Panc1 (cell line): ENCODE measurements at regions of chr1 and their contacts with region 1.

Region 1: DNA sequence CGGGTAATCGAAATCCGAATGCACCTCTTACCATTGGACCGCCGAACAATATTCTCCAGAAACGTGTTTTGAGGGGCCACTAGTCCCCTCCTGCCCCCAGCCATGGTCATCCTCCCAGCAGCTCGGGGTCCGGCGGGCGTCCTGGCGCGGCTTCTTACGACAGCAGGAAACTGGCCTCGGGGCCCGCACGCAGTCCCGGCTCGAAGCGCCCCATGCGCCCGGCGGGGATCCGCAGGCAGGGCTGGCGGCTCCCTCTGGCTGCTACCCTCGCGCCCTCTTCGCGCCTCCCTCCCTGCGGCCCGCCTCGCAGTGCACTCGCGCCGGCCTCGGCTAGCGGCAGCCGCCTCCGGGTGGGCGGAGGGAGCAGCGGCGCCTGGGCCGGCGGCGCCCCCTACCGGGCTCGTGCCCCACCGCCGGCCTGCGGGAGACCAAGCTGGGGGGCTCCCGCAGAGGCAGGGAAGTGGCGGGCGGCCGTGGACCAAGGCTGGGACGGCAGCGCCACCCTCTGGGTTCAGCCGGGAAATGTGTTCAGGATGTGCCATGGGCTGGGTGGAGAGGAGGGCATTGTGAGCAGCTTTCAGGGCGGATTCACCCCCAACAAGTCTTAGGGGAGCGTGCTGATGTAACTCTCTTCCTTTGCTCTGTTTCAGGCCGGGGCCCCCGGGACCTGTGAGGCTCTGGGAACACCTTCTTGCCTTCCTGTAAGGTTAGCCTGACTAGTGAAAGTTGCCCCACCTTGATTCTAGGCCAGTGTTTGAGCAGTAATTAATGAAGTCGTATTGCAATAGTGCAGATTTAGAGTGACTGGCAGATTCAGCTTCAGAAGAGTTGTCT is at the start of gene KCNH1:
- DNase-seq: no peak
- ATAC-seq: peak; percentile 95
- H3K4me3 ChIP-seq: peak within 1 kb of the TSS; percentile 39 to 49
- H3K27ac ChIP-seq: no peak within 1 kb of the TSS
- H3K4me1 ChIP-seq: peaks cover 4% of the 10 kb centered on the region; the same call in 1 of the 2 replicates
- H3K27me3 ChIP-seq: peaks cover 31% of the 10 kb centered on the region
- CTCF ChIP-seq: peak; percentile 98
- total RNA-seq, gene KCNH1: not detected

Region 2: GRCh38 chr1:210407207-210407886 is 726.7 kb before region 1 on chr1:
- CTCF ChIA-PET with region 1: interaction called, 3 read pairs
- POLR2A ChIA-PET with region 1: no interaction called
- in situ Hi-C with region 1: no loop called
- intact Hi-C with region 1: loop called (anchors 1 kb)
- DNase-seq: peak; percentile 52
- ATAC-seq: peak; percentile 90
- H3K4me3 ChIP-seq: no peak overlapping the region
- H3K27ac ChIP-seq: no peak overlapping the region
- H3K4me1 ChIP-seq: no peaks in the 10 kb centered on the region
- H3K27me3 ChIP-seq: no peaks in the 10 kb centered on the region
- CTCF ChIP-seq: peak; percentile 95

Region 3: DNA sequence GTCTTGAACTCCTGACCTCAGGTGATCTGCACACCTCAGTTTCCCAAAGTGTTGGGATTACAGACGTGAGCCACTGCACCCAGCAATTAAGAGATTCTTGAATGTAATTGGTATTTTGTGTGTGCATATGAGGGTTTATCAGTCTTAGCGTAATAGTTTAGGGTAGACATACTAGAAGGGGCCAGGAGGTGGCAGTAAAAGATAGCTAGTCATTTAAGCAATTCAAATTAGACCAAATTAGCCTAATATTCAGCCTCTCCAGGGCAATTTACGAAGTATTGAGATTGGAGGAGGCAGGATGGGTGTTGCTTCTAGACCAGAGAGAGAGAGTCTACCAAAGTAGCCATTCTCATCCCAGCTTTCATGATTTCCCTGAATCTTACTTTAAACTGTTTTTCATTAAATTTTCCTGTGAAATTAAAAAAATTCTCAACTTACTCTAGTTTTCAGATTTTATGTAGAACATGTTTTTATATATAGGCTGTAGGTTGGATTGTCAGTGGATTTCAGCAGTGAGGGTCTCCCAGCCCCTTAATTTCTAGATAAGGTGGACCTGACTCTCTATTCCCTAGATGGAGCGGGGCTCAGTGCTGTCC is 685.7 kb before region 1 on chr1:
- CTCF ChIA-PET with region 1: interaction called, 8 read pairs
- POLR2A ChIA-PET with region 1: no interaction called
- in situ Hi-C with region 1: no loop called
- intact Hi-C with region 1: loop called (anchors 1 kb)
- DNase-seq: peak; percentile 22
- ATAC-seq: peak; percentile 84
- H3K4me3 ChIP-seq: no peak overlapping the region
- H3K27ac ChIP-seq: no peak overlapping the region
- H3K4me1 ChIP-seq: no peaks in the 10 kb centered on the region
- H3K27me3 ChIP-seq: 0 out of 2 replicates have a peak, but pooled peaks cover 2% of the 10 kb centered on the region
- CTCF ChIP-seq: peak; percentile 76

Region 4: GRCh38 chr1:210584439-210585113 is 549.5 kb before region 1 on chr1:
- CTCF ChIA-PET with region 1: interaction called, 3 read pairs
- POLR2A ChIA-PET with region 1: interaction called, 4 read pairs
- in situ Hi-C with region 1: no loop called
- intact Hi-C with region 1: loop called (anchors 2 kb)
- DNase-seq: no peak
- ATAC-seq: peak; percentile 95
- H3K4me3 ChIP-seq: no peak overlapping the region
- H3K27ac ChIP-seq: no peak overlapping the region
- H3K4me1 ChIP-seq: no peaks in the 10 kb centered on the region
- H3K27me3 ChIP-seq: no peaks in the 10 kb centered on the region
- CTCF ChIP-seq: peak; percentile 73

Region 5: GRCh38 chr1:210709701-210710100 is 424.4 kb before region 1 on chr1:
- CTCF ChIA-PET with region 1: no interaction called
- POLR2A ChIA-PET with region 1: no interaction called
- in situ Hi-C with region 1: no loop called
- intact Hi-C with region 1: loop called (anchors 10 kb)
- DNase-seq: no peak
- ATAC-seq: no peak
- H3K4me3 ChIP-seq: no peak overlapping the region
- H3K27ac ChIP-seq: no peak overlapping the region
- H3K4me1 ChIP-seq: no peaks in the 10 kb centered on the region
- H3K27me3 ChIP-seq: no peaks in the 10 kb centered on the region; the same call in 1 of the 2 replicates
- CTCF ChIP-seq: no peak

Region 6: DNA sequence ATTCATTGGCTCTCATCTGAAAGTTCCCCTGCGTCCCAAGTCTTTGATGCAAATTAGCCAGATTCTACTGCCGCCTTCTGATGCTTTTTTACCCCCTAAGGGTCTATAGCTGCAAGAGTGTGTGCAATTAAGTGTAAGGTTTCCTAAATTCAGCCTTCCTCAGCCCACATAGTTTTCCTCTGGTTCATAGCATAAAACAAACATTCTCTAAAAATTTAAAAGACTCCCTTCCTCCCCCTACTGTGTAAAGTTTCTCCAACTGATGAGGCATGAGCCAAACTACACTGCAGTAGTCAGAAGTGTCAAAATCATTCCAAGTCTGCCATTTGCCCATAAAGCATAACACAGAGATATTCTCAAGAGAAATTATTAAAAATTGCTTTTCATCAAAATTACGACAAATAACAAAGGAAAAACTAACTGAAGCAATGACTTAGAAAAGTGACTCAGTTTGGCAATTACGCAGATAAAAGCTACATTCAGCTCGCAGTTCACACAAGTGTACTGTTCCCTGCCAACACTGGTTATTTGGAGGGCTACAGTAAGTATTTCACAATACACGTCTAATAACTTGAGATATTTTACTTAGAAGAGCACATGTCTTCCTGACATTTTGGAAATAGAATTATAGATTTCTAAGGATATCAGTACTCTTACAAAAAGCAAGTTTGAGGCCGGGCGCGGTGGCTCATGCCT is 15.5 kb before region 1 on chr1:
- CTCF ChIA-PET with region 1: no interaction called
- POLR2A ChIA-PET with region 1: no interaction called
- in situ Hi-C with region 1: no loop called
- intact Hi-C with region 1: no loop called
- DNase-seq: no peak
- ATAC-seq: no peak
- H3K4me3 ChIP-seq: no peak overlapping the region
- H3K27ac ChIP-seq: no peak overlapping the region
- H3K4me1 ChIP-seq: no peaks in the 10 kb centered on the region
- H3K27me3 ChIP-seq: peaks cover 4% of the 10 kb centered on the region; the same call in 1 of the 2 replicates
- CTCF ChIP-seq: no peak

Region 7: DNA sequence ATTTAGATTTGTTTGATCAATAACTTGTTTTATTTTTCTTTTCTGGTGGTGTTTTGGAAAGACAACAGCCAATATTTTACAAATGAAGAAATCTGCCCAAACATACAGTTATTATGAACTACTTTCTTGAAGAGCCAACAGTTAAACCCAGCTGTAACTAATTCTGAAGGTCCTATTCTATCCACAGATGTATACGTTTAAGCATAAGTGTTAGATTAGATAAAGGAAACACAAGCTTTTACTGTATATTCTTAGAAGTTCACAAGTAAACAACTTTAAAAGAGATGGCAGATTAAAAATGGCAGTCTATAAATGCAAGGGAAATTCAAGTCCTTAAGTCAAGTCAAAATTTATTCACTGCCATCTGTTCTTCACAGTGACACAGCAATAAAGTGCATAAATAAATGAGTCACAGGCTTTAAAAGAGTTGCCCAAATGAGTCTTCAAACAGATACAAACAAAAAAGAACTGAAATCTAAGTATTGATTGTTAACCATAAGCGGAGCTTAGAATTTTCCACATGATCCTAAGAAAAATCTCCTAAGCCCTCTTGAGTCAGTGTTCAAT is 49.8 kb after region 1 on chr1:
- CTCF ChIA-PET with region 1: no interaction called
- POLR2A ChIA-PET with region 1: no interaction called
- in situ Hi-C with region 1: no loop called
- intact Hi-C with region 1: no loop called
- DNase-seq: no peak
- ATAC-seq: no peak
- H3K4me3 ChIP-seq: no peak overlapping the region
- H3K27ac ChIP-seq: no peak overlapping the region
- H3K4me1 ChIP-seq: no peaks in the 10 kb centered on the region
- H3K27me3 ChIP-seq: no peaks in the 10 kb centered on the region
- CTCF ChIP-seq: no peak